Ovary (tissue), 10 donors: ENCODE measurements at regions of chr3 and their contacts with region 1.

Region 1: DNA sequence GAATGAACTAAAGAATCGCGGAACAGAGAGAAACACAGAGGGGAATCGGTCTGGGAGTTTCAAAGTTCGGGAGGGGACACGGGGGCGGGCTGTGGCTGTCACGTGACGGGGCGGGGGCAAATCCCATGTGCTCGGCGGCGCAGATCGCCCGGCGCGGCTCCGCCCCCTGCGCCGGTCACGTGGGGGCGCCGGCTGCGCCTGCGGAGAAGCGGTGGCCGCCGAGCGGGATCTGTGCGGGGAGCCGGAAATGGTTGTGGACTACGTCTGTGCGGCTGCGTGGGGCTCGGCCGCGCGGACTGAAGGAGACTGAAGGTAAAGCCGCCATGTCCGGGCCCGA is at the start of gene EIF4G1:
- DNase-seq: peak; percentile 94 to 97 (median 95)
- H3K4me3 ChIP-seq: peak within 1 kb of the TSS; percentile 52
- H3K27ac ChIP-seq: peak within 1 kb of the TSS; percentile 94 to 95
- H3K4me1 ChIP-seq: peaks cover 7% of the 10 kb centered on the region
- H3K27me3 ChIP-seq: no peaks in the 10 kb centered on the region
- CTCF ChIP-seq: no peak
- EP300 ChIP-seq: no peak
- POLR2A ChIP-seq: peak; percentile 61
- total RNA-seq, gene EIF4G1: 72.4 to 295 (median 212) TPM

Region 2: GRCh38 chr3:183635431-183636220 is 678.7 kb before region 1 on chr3 and contains the start of gene KLHL24:
- intact Hi-C with region 1: loop called in 1 of 4 experiments (anchors 10 kb)
- DNase-seq: peak; percentile 93 to 94 (median 94)
- H3K4me3 ChIP-seq: peak within 1 kb of the TSS; percentile 70
- H3K27ac ChIP-seq: peak within 1 kb of the TSS; percentile 96 to 100
- H3K4me1 ChIP-seq: no peaks in the 10 kb centered on the region
- H3K27me3 ChIP-seq: no peaks in the 10 kb centered on the region
- CTCF ChIP-seq: peak in 1 of 3 donors; percentile 4
- EP300 ChIP-seq: no peak
- POLR2A ChIP-seq: peak; percentile 95
- total RNA-seq, gene KLHL24: 45.7 to 135 (median 79.1) TPM

Region 3: DNA sequence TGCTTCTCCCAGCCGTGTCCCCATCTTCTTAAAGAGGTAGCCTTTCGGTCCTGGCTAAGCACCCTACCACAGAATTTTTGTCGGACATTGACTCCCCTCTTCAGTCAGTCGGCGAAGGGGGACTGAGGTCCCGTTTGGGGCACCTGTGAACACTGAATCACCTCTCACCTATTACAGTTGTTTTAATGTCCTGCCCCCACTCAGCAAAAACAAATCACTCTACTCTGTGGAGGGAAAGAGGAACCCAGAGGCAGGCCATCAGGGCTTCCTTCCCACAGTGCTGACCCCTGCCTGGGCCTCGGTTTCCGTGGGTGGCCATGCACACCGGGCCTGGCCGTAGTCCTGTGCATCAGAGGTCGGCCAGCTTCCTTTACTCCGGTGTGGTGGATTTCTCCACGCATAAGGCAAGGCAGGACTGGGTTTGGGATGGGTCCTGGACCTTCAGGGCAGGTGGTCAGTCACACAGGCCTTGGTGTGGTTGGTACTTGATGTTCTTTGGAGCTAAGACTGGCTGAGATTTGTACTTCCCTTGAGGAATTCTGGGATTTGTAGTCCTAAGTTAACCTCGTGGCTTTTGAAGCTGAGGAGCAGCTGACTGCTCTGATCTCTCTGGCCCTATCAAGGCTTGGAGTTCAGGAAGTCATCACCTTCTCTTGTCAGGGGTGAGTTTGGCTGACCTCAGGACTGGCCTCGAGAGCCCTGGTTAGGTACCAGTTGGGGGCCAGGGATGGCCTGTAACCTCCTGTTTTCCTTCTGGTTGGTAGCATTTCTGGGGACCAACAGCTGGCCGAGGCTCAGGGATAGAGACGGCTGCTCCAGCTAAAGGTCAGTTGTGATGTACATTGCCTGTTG is 22.4 kb after region 1 on chr3:
- intact Hi-C with region 1: loop called in 1 of 4 experiments (anchors 1 kb)
- DNase-seq: no peak
- H3K4me3 ChIP-seq: peak overlapping the region; percentile 81
- H3K27ac ChIP-seq: peak overlapping the region; percentile 93 to 95
- H3K4me1 ChIP-seq: peaks cover 20% of the 10 kb centered on the region
- H3K27me3 ChIP-seq: no peaks in the 10 kb centered on the region
- CTCF ChIP-seq: no peak
- EP300 ChIP-seq: no peak
- POLR2A ChIP-seq: peak; percentile 31

Region 4: GRCh38 chr3:184362668-184363540 is 48.6 kb after region 1 on chr3:
- intact Hi-C with region 1: loop called in 3 of 4 experiments (anchors 5 to 10 kb)
- DNase-seq: peak; percentile 95 to 98 (median 97)
- H3K4me3 ChIP-seq: peak overlapping the region; percentile 76
- H3K27ac ChIP-seq: peak overlapping the region; percentile 95 to 100
- H3K4me1 ChIP-seq: peaks cover 19% of the 10 kb centered on the region
- H3K27me3 ChIP-seq: no peaks in the 10 kb centered on the region
- CTCF ChIP-seq: peak in 2 of 3 donors; percentile 69 to 74
- EP300 ChIP-seq: no peak
- POLR2A ChIP-seq: peak; percentile 79

Region 5: DNA sequence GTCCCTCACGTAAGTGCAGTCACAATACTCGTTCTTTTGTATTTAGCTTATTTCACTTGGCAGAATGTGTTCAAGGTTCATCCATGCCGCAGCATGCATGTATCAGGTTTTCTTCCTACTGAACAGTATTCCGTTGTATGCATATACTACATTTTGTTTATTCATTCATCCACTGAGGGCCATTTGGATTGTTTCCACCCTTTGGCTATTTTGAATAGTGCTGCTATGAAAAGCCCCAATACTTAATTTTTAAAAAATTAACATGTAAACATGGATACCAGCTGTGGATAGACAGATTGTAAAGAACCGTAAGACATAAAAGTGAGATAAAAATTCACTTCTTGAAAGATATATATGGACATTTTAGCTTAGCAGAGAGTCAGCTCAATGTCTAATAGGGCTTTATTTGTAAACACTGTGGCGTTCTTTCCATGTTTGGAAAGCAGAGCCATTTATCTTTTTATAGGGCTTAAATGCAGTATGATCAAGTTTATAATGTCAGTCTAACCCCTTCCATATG is 613.5 kb after region 1 on chr3:
- intact Hi-C with region 1: no loop called
- DNase-seq: no peak
- H3K4me3 ChIP-seq: no peak overlapping the region
- H3K27ac ChIP-seq: no peak overlapping the region
- H3K4me1 ChIP-seq: no peaks in the 10 kb centered on the region
- H3K27me3 ChIP-seq: no peaks in the 10 kb centered on the region
- CTCF ChIP-seq: no peak
- EP300 ChIP-seq: no peak
- POLR2A ChIP-seq: no peak

Region 6: DNA sequence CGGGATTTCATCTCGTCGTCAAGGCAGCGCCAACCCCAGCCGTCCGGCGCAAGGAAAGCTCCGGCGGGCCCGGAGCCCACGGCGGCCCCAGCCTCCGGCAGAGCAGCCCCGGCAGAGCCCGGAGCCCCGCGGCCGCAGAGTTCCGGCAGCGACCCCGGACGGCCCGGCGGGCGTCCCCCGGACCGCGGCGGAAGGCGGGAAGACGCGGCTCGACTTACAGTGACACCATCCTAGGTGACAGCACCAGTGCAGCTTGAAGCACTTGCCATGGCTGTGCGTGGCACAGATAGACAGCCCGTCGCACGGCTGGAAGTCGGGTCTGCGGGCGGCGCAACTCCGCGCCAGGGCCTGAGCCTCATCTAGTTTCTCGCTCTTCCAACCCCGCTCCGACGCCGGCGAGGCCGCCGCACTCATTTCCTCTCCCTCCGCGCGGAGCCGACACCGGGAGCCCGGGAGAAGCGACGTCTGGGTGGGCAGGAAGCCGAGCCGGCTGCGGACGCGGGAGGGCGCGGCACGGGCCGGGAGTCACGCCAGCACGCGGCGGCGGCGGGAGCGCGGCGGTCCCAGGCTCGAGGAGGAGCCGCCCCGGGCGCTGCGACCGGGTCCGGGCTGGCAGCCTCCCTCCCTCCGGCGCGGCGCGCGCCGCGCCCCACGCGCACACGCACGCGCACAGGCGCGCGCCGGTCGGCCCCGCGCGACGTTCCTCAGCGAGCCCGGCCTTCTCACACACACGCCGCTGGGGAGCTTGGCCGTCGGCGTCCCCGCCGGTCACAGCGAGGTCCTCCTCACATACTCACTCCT is 838.3 kb after region 1 on chr3 and contains the start of gene C3orf70:
- intact Hi-C with region 1: no loop called
- DNase-seq: peak; percentile 65 to 86 (median 78)
- H3K4me3 ChIP-seq: peak within 1 kb of the TSS; percentile 67
- H3K27ac ChIP-seq: peak within 1 kb of the TSS; percentile 65 to 82
- H3K4me1 ChIP-seq: peaks cover 1% of the 10 kb centered on the region
- H3K27me3 ChIP-seq: no peaks in the 10 kb centered on the region
- CTCF ChIP-seq: no peak
- EP300 ChIP-seq: no peak
- POLR2A ChIP-seq: peak; percentile 10
- total RNA-seq, gene C3orf70: 3.8 to 17.7 (median 7.6) TPM